Caco-2 (cell line): ENCODE measurements at regions of chr9 and their contacts with region 1.

Region 1: GRCh38 chr9:112166172-112167140 is 8.6 kb downstream of the SUSD1 start:
- DNase-seq: peak; percentile 59 to 68
- H3K4me3 ChIP-seq: no peak overlapping the region
- H3K4me3 Mint-ChIP-seq: no peak overlapping the region
- H3K27ac Mint-ChIP-seq: peak overlapping the region; percentile 83
- H3K4me1 ChIP-seq: peaks cover 93% of the 10 kb centered on the region
- H3K4me1 Mint-ChIP-seq: peaks cover 49% of the 10 kb centered on the region
- H3K27me3 ChIP-seq: no peaks in the 10 kb centered on the region
- H3K27me3 Mint-ChIP-seq: no peaks in the 10 kb centered on the region
- CTCF ChIP-seq: peak; percentile 23 to 63

Region 2: GRCh38 chr9:111516061-111516465 is 650.4 kb before region 1 on chr9:
- CTCF ChIA-PET with region 1: no interaction called
- POLR2A ChIA-PET with region 1: no interaction called
- intact Hi-C with region 1: no loop called
- DNase-seq: peak in 1 of 2 experiments; percentile 41
- H3K4me3 ChIP-seq: no peak overlapping the region
- H3K4me3 Mint-ChIP-seq: no peak overlapping the region
- H3K27ac Mint-ChIP-seq: no peak overlapping the region
- H3K4me1 ChIP-seq: no peaks in the 10 kb centered on the region
- H3K4me1 Mint-ChIP-seq: no peaks in the 10 kb centered on the region
- H3K27me3 ChIP-seq: no peaks in the 10 kb centered on the region
- H3K27me3 Mint-ChIP-seq: no peaks in the 10 kb centered on the region
- CTCF ChIP-seq: no peak

Region 3: DNA sequence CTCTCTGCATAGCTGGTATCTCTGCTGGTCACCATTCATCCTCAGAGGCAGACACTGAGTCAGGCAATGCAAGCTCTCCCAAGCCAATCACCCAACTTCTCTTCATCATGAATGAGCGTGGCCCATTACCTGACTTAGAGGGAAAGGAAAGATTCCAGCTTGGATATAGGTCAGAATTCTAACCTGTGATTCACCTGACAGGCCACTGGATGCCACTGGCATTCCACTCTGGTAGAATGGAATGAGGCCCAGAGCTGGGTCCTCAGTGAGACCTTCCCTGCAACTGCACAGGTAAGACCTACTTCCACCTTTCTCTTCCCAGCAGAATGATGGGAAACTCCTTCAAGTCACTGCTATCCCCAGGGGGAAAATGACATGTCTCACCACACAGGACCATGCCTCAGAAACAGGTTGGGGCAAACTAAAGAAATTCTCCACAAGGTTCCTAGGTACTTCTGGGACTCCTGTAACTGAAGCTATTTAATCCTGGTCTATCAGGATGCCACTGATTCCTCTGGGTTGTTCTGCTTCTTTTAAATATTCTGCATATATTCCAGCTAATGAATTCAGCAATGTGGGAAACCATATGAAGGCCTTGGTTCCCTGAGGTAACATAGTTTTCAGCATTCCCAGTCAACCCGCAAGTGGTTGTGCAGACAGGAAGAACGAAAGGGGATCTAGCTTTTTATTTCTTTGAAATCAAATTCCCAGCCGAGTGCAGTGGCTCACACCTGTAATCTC is 53.3 kb before region 1 on chr9:
- CTCF ChIA-PET with region 1: interaction called, 5 read pairs
- POLR2A ChIA-PET with region 1: no interaction called
- intact Hi-C with region 1: loop called (anchors 1 kb)
- DNase-seq: peak; percentile 78 to 80
- H3K4me3 ChIP-seq: no peak overlapping the region
- H3K4me3 Mint-ChIP-seq: no peak overlapping the region
- H3K27ac Mint-ChIP-seq: peak overlapping the region; percentile 53
- H3K4me1 ChIP-seq: peaks cover 39% of the 10 kb centered on the region
- H3K4me1 Mint-ChIP-seq: peaks cover 32% of the 10 kb centered on the region
- H3K27me3 ChIP-seq: no peaks in the 10 kb centered on the region
- H3K27me3 Mint-ChIP-seq: no peaks in the 10 kb centered on the region
- CTCF ChIP-seq: peak; percentile 80 to 81

Region 4: DNA sequence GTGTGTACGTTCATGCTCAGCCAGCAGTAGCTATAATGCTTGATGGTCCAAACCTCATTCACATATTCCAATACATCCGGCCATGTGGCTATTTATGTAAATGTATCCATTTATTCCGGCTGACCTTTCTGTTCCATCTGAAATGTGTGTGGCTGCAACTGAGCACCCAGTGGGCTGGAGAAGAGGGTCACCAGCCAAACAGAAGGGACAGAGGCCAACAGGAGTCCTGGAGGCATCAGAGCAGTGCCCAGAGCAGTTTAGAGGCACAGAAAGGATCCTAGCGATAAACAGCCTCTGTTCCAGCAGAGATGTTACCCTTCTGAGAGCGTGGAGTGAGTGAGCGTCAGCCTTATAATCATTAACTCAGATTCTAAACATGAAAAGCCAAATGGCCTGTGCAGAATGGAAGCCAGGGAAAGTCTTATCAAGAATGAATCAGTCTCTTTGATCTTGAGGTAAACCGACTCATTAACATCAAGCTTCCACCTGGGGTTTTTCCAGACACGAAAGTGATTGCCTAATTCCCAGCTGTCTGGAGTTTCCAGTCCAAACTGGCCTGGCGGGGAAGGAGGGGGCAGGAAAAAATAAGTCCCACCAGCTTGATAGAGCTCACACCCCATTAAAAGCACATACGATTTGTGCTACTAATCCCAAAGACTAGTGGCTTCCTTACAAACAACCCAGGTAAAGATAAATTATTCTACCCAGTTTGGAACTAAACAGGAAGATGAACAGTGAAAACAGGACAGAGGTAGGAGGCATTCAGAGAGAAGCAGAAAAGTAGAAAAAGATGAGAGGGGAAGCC is 47.0 kb before region 1 on chr9:
- CTCF ChIA-PET with region 1: no interaction called
- POLR2A ChIA-PET with region 1: no interaction called
- intact Hi-C with region 1: loop called (anchors 1 kb)
- DNase-seq: peak; percentile 89 to 91
- H3K4me3 ChIP-seq: no peak overlapping the region
- H3K4me3 Mint-ChIP-seq: peak overlapping the region; percentile 45
- H3K27ac Mint-ChIP-seq: peak overlapping the region; percentile 96
- H3K4me1 ChIP-seq: peaks cover 54% of the 10 kb centered on the region
- H3K4me1 Mint-ChIP-seq: peaks cover 51% of the 10 kb centered on the region
- H3K27me3 ChIP-seq: no peaks in the 10 kb centered on the region
- H3K27me3 Mint-ChIP-seq: no peaks in the 10 kb centered on the region
- CTCF ChIP-seq: no peak

Region 5: DNA sequence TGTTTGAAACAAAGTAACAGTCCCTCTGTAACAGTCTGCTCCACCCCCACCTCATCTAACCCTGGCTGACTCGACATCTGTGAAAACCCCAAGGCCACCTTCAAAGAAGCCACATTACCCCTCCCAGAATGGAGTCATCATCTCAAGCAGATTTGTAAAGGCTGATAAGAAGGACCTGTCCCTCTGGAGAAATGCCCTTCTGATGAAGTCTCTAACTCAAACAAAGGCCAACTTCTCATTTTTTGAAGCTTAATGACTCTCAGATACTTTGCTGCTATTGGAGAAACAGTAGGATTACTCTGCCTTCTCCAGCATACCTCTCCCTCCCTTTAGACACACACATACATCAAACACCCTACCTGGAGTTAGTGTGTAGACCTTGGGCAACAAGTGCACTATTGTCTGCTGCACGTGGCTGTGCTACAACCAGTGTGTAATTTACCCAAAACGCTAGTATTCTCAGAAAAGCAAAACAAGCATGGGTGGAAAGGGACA is 14.0 kb after region 1 on chr9:
- CTCF ChIA-PET with region 1: interaction called, 5 read pairs
- POLR2A ChIA-PET with region 1: interaction called, 3 read pairs
- intact Hi-C with region 1: loop called (anchors 1 kb)
- DNase-seq: peak; percentile 54 to 57
- H3K4me3 ChIP-seq: no peak overlapping the region
- H3K4me3 Mint-ChIP-seq: peak overlapping the region; percentile 55
- H3K27ac Mint-ChIP-seq: peak overlapping the region; percentile 88
- H3K4me1 ChIP-seq: peaks cover 56% of the 10 kb centered on the region
- H3K4me1 Mint-ChIP-seq: peaks cover 40% of the 10 kb centered on the region
- H3K27me3 ChIP-seq: no peaks in the 10 kb centered on the region
- H3K27me3 Mint-ChIP-seq: no peaks in the 10 kb centered on the region
- CTCF ChIP-seq: no peak